ENCODE measurements at regions of chr1 and their contacts with region 1.

Region 1: DNA sequence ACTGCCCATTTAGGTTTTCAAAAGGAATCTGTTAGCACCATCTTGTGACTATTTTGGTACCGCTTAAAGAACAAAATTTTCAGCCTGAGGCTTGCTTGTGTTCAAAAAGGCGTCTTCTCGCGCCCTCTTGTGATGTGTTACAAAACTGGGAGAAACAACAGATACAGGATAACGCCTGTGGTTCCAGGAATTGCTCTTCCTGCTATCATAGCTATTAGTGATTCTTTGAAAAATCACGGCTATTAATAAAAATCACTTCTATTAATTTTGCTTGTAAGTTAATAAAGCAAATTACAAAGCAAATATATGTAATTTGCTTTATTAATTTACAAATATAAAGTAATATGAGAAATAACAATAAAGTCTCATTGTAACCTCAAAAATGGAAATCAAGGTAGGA is 82.2 kb upstream of the ABCD3 start:
- DNase-seq: peak; percentile 54
- H3K4me3 ChIP-seq: no peak overlapping the region
- H3K27me3 ChIP-seq: peaks cover 5% of the 10 kb centered on the region; the same call in 1 of the 2 replicates
- CTCF ChIP-seq: peak; percentile 82

Region 2: GRCh38 chr1:94045465-94046056 is 290.4 kb before region 1 on chr1:
- CTCF ChIA-PET with region 1: interaction called, 874 read pairs
- POLR2A ChIA-PET with region 1: interaction called, 4 read pairs
- DNase-seq: peak; percentile 86
- H3K4me3 ChIP-seq: no peak overlapping the region
- H3K27me3 ChIP-seq: no peaks in the 10 kb centered on the region
- CTCF ChIP-seq: peak; percentile 71

Region 3: DNA sequence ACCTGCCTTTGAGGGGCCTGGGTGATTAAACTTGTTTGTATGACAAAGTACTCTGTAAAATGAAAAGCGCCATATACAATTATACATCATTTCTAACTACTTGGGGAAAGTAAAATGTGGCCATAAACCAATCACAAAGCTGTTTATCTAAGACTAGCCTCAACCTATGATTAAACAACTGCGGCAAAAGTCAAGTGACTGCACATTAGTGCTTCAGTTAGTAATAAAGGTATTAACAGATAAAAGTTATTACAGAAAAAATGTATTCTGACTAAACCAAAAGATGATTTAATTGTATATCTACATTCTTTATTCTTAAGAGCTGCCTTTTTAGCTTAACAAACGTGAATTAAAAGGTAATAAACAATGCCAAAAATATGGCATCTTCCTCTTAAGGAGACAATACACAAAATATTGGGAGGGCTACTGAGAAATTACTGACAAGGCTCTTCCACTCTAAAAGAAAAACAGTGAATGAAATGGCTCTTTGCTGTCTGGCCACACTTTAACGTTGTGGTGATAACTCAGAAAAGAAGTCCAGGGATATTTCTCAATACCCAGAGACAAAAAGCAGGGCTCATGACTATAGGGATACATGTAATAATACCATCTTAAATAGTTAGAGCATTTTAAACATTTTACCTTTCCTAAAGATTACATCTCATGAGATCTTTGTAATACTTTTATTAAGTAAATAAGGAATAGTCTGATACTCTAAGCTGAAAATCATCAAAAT is 107.1 kb before region 1 on chr1:
- CTCF ChIA-PET with region 1: interaction called, 10 read pairs
- POLR2A ChIA-PET with region 1: no interaction called
- DNase-seq: no peak
- H3K4me3 ChIP-seq: no peak overlapping the region
- H3K27me3 ChIP-seq: no peaks in the 10 kb centered on the region
- CTCF ChIP-seq: no peak

Region 4: GRCh38 chr1:94325379-94326302 is 10.3 kb before region 1 on chr1:
- CTCF ChIA-PET with region 1: interaction called, 18 read pairs
- POLR2A ChIA-PET with region 1: no interaction called
- DNase-seq: peak; percentile 99
- H3K4me3 ChIP-seq: no peak overlapping the region
- H3K27me3 ChIP-seq: no peaks in the 10 kb centered on the region
- CTCF ChIP-seq: no peak

Region 5: GRCh38 chr1:94379615-94380014 is 43.7 kb after region 1 on chr1:
- CTCF ChIA-PET with region 1: no interaction called
- POLR2A ChIA-PET with region 1: no interaction called
- DNase-seq: no peak
- H3K4me3 ChIP-seq: no peak overlapping the region
- H3K27me3 ChIP-seq: peaks cover 11% of the 10 kb centered on the region
- CTCF ChIP-seq: no peak

Region 6: GRCh38 chr1:94408104-94408830 is 72.3 kb after region 1 on chr1:
- CTCF ChIA-PET with region 1: no interaction called
- POLR2A ChIA-PET with region 1: no interaction called
- DNase-seq: no peak
- H3K4me3 ChIP-seq: no peak overlapping the region
- H3K27me3 ChIP-seq: peaks cover 6% of the 10 kb centered on the region
- CTCF ChIP-seq: no peak

Region 7: DNA sequence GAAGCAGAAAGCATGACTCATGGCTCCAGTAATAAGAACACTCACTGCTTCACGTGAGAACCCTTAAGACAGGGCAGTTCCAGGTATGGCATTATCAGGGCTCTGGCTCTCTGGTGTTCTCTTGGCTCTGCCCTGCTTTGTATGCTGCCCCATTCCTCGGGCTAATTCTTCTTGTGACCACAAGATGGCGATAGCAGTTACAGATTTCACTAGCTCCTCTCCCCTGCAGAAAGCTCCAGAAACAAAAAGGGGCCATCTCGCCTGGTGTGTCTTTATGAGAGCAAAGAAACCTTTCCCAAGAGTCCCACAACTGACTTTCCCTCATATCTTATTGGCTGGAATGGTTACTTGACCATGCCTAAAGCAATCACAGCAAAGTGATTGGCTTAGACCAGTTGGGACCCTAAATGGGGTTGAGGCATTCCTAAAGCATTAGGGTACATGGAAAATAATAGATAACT is 145.6 kb after region 1 on chr1:
- CTCF ChIA-PET with region 1: no interaction called
- POLR2A ChIA-PET with region 1: no interaction called
- DNase-seq: peak; percentile 3
- H3K4me3 ChIP-seq: no peak overlapping the region
- H3K27me3 ChIP-seq: no peaks in the 10 kb centered on the region
- CTCF ChIP-seq: peak; percentile 84